CD4-positive, alpha-beta T cell (primary cell): ENCODE measurements at regions of chr19 and their contacts with region 1.

Region 1: GRCh38 chr19:47112997-47113849 is at the start of gene ZC3H4:
- DNase-seq: peak; percentile 98 to 100 (median 99)
- ATAC-seq: peak; percentile 82
- H3K4me3 ChIP-seq: peak within 1 kb of the TSS; percentile 82
- H3K4me3 Mint-ChIP-seq: peak within 1 kb of the TSS; percentile 98
- H3K27ac ChIP-seq: peak within 1 kb of the TSS; percentile 99 to 100
- H3K27ac Mint-ChIP-seq: peak within 1 kb of the TSS; percentile 98
- H3K4me1 ChIP-seq: peaks cover 24% of the 10 kb centered on the region
- H3K4me1 Mint-ChIP-seq: peaks cover 37% of the 10 kb centered on the region
- H3K27me3 ChIP-seq: no peaks in the 10 kb centered on the region
- H3K27me3 Mint-ChIP-seq: no peaks in the 10 kb centered on the region
- CTCF ChIP-seq: no peak
- total RNA-seq, gene ZC3H4: 39.4 to 43.7 TPM

Region 2: DNA sequence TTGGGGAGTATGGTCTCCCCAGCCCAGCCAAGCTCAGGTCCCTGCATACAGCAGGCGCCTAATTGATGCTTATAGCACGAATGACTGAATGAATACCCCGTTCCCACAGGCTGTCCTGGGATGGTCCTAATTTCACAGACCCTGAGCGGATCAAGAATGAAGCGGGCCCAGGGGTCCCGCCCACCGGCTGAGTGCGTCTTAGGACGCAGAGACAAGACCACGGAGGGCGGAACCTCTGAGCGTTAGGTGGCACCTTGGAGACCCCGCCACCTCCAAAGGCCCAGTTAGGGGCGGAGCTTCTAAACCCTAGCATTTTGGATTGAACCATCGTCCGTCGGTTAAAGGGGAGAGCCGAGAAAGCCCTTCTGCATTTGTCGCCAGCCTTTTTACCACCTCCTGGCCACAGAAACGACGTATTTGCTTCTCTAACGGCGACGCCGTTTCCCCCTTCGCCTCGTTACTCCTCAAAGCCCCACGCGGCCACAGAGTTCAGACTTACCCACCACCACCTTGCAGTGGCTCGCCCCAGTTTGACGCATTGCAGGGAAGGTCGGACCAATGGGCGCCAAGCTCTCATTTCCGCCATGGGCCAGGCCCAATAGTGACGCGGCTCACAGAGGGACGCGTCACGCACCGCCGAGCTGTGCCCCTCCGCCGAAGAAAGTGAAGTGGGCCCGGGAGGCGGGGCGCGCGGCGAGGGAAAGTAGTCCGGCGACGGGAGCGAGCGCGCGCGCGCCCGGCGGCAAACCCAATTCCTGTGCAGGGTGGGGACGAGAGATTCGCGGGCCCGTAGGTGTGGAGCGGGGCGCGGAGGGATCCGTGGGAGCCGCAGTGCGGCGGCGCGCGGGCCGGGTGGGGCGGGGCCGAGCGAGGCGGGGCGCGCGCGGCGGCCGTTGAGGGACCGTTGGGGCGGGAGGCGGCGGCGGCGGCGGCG is 512.6 kb before region 1 on chr19:
- CTCF ChIA-PET with region 1: no interaction called
- POLR2A ChIA-PET with region 1: interaction called, 10 read pairs
- intact Hi-C with region 1: no loop called
- DNase-seq: peak; percentile 96 to 99 (median 98)
- ATAC-seq: peak; percentile 87
- H3K4me3 ChIP-seq: peak overlapping the region; percentile 100
- H3K4me3 Mint-ChIP-seq: peak overlapping the region; percentile 95
- H3K27ac ChIP-seq: peak overlapping the region; percentile 100
- H3K27ac Mint-ChIP-seq: peak overlapping the region; percentile 100
- H3K4me1 ChIP-seq: peaks cover 48% of the 10 kb centered on the region
- H3K4me1 Mint-ChIP-seq: peaks cover 51% of the 10 kb centered on the region
- H3K27me3 ChIP-seq: no peaks in the 10 kb centered on the region
- H3K27me3 Mint-ChIP-seq: no peaks in the 10 kb centered on the region
- CTCF ChIP-seq: no peak

Region 3: DNA sequence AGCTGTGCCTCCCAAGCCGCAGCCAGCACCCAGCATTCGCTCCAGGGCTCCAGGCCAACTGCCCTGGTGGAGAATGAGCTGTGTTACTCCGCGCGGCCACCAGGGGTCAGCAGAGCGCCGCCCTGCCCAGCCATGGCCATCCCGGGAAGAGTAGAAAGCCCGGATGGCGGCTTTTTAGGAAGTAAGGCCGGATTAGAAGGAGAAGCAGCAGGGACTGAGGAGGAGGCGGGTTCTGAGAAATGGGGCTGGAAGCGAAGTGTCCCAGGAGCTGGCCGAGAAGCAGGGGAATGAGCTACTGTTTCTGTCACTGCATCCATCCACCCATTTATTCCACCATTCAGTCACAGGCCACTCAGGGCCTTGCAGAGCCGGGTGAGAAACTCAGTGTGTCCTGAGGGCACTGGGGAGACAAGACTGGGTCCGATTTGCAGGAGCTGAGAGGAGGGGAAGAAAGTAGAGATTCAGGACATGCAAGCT is 100.1 kb before region 1 on chr19:
- CTCF ChIA-PET with region 1: no interaction called
- POLR2A ChIA-PET with region 1: interaction called, 5 read pairs
- intact Hi-C with region 1: loop called in 1 of 2 experiments (anchors 10 kb)
- DNase-seq: peak; percentile 35 to 80 (median 58)
- ATAC-seq: peak; percentile 92
- H3K4me3 ChIP-seq: no peak overlapping the region
- H3K4me3 Mint-ChIP-seq: no peak overlapping the region
- H3K27ac ChIP-seq: no peak overlapping the region
- H3K27ac Mint-ChIP-seq: no peak overlapping the region
- H3K4me1 ChIP-seq: peaks cover 8% of the 10 kb centered on the region
- H3K4me1 Mint-ChIP-seq: peaks cover 8% of the 10 kb centered on the region
- H3K27me3 ChIP-seq: no peaks in the 10 kb centered on the region
- H3K27me3 Mint-ChIP-seq: peaks cover 10% of the 10 kb centered on the region
- CTCF ChIP-seq: peak; percentile 99

Region 4: GRCh38 chr19:47094557-47095475 is 18.4 kb before region 1 on chr19:
- CTCF ChIA-PET with region 1: interaction called, 3 read pairs
- POLR2A ChIA-PET with region 1: interaction called, 124 read pairs
- intact Hi-C with region 1: loop called (anchors 2 kb)
- DNase-seq: peak in 10 of 14 experiments; percentile 7 to 73 (median 30)
- ATAC-seq: peak; percentile 73
- H3K4me3 ChIP-seq: peak overlapping the region; percentile 23
- H3K4me3 Mint-ChIP-seq: no peak overlapping the region
- H3K27ac ChIP-seq: peak overlapping the region; percentile 70 to 90
- H3K27ac Mint-ChIP-seq: peak overlapping the region; percentile 83
- H3K4me1 ChIP-seq: peaks cover 49% of the 10 kb centered on the region
- H3K4me1 Mint-ChIP-seq: peaks cover 41% of the 10 kb centered on the region
- H3K27me3 ChIP-seq: no peaks in the 10 kb centered on the region
- H3K27me3 Mint-ChIP-seq: no peaks in the 10 kb centered on the region
- CTCF ChIP-seq: no peak

Region 5: GRCh38 chr19:47130591-47131227 is 17.5 kb after region 1 on chr19 and contains the start of gene SAE1:
- CTCF ChIA-PET with region 1: interaction called, 5 read pairs
- POLR2A ChIA-PET with region 1: interaction called, 45 read pairs
- intact Hi-C with region 1: loop called in 1 of 2 experiments (anchors 2 kb)
- DNase-seq: peak; percentile 82 to 98 (median 92)
- ATAC-seq: peak; percentile 91
- H3K4me3 ChIP-seq: peak within 1 kb of the TSS; percentile 95
- H3K4me3 Mint-ChIP-seq: peak within 1 kb of the TSS; percentile 96
- H3K27ac ChIP-seq: peak within 1 kb of the TSS; percentile 68 to 74
- H3K27ac Mint-ChIP-seq: peak within 1 kb of the TSS; percentile 83
- H3K4me1 ChIP-seq: peaks cover 44% of the 10 kb centered on the region
- H3K4me1 Mint-ChIP-seq: peaks cover 52% of the 10 kb centered on the region
- H3K27me3 ChIP-seq: no peaks in the 10 kb centered on the region
- H3K27me3 Mint-ChIP-seq: no peaks in the 10 kb centered on the region
- CTCF ChIP-seq: peak; percentile 73
- total RNA-seq, gene SAE1: 29.6 to 30.9 TPM

Region 6: DNA sequence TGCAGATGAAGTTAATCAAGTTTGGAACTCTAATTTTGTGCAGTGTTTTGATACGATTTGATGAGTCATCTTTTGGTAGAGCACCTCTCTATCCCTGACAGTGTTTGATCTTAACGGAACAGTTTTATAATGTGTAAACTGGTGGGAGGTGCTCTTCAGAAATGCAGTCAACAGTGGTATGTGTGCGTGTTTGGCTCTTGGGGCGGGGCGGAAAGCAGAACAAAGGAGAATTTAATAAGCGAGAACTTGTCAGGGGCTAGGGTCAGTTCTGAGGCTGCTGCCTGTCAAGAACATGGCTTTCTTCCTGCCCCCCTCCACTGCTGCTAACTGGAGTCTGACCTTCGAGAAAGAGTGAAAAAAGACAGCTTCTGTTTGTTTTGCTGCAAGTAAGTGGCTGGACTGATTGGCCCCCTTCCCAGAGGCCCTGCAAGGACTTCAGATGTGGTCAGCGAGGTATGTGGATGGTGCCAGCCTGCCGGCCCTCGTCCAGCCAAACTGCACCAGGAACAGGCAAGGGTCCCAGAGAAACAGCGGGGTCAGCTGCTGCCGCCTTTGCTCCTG is 77.0 kb after region 1 on chr19:
- CTCF ChIA-PET with region 1: interaction called, 3 read pairs
- POLR2A ChIA-PET with region 1: interaction called, 19 read pairs
- intact Hi-C with region 1: no loop called
- DNase-seq: peak; percentile 34 to 80 (median 64)
- ATAC-seq: peak; percentile 53
- H3K4me3 ChIP-seq: no peak overlapping the region
- H3K4me3 Mint-ChIP-seq: peak overlapping the region; percentile 49
- H3K27ac ChIP-seq: peak overlapping the region; percentile 0 to 36
- H3K27ac Mint-ChIP-seq: peak overlapping the region; percentile 90
- H3K4me1 ChIP-seq: peaks cover 82% of the 10 kb centered on the region
- H3K4me1 Mint-ChIP-seq: peaks cover 58% of the 10 kb centered on the region
- H3K27me3 ChIP-seq: no peaks in the 10 kb centered on the region
- H3K27me3 Mint-ChIP-seq: no peaks in the 10 kb centered on the region
- CTCF ChIP-seq: no peak

Region 7: DNA sequence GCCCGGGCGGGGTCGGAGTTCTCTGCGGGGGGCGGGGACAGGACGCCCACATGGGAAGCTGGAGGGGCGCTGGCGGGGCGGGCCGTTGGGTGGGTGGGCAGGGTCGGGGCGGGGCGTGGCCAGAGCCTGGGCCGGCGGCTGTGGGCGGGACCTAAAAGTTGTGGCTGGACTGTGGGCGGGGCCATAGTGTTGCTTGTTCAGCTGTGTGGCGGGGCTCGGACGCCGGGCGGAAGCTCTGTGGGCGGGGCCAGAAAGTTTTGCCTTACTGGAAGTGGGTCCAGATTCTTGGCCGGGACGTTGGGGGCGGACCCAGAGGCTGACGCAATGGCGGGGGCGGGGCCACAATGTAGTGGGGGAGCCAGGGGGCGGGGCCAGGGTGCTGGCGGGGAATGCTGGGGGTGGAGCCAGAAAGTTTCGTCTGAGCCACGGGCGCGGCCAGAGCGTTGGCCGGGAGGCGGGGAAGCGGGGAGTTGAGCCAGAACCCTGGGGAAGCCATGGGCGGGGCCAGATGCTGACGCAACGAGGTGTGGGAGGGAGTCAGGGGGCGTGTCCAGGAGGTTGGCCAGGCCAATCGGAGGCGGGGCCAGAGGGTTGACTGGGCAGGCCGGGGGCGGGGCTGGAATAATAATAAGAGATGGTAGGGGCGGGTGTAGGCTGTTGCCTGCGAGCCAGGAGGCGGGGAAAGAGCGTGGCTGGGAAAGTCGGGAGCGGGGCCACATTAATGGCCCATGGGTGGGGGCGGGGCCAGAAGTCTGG is 143.6 kb after region 1 on chr19:
- CTCF ChIA-PET with region 1: no interaction called
- POLR2A ChIA-PET with region 1: interaction called, 49 read pairs
- intact Hi-C with region 1: no loop called
- DNase-seq: peak; percentile 96 to 100 (median 98)
- ATAC-seq: peak; percentile 77
- H3K4me3 ChIP-seq: peak overlapping the region; percentile 72
- H3K4me3 Mint-ChIP-seq: peak overlapping the region; percentile 84
- H3K27ac ChIP-seq: peak overlapping the region; percentile 69 to 91
- H3K27ac Mint-ChIP-seq: peak overlapping the region; percentile 97
- H3K4me1 ChIP-seq: peaks cover 30% of the 10 kb centered on the region
- H3K4me1 Mint-ChIP-seq: peaks cover 39% of the 10 kb centered on the region
- H3K27me3 ChIP-seq: no peaks in the 10 kb centered on the region
- H3K27me3 Mint-ChIP-seq: no peaks in the 10 kb centered on the region
- CTCF ChIP-seq: no peak